ENCODE measurements at regions of chr22 and their contacts with region 1.

Region 1: DNA sequence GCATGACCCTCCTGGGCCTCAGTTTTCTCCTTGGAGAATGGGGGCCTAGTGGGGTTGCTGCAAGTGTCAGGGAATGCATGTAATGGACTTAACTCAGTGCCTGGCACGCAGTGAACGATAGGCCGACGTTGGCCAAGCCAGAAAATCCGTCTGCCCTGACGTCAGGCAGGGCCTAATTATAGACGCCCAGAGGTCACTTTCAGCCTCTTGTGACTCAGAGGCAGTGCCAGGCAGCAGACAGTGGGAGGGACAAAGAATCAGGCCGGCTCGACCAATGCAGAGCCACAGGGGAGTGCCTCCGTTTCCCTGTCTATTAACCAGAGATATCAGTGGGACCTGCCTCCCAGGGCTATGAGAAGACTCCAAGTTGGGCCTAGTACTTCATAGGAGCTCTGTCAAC is 115.0 kb downstream of the MN1 start:
- DNase-seq: no peak
- ATAC-seq: no peak
- H3K4me3 ChIP-seq: no peak overlapping the region
- H3K4me3 Mint-ChIP-seq: no peak overlapping the region
- H3K27ac ChIP-seq: no peak overlapping the region
- H3K27ac Mint-ChIP-seq: no peak overlapping the region
- H3K4me1 ChIP-seq: no peaks in the 10 kb centered on the region
- H3K4me1 Mint-ChIP-seq: no peaks in the 10 kb centered on the region
- H3K27me3 ChIP-seq: no peaks in the 10 kb centered on the region
- H3K27me3 Mint-ChIP-seq: peaks cover 8% of the 10 kb centered on the region
- CTCF ChIP-seq: no peak

Region 2: GRCh38 chr22:27748751-27749191 is 62.2 kb after region 1 on chr22:
- CTCF ChIA-PET with region 1: no interaction called
- POLR2A ChIA-PET with region 1: no interaction called
- intact Hi-C with region 1: loop called in 1 of 2 experiments (anchors 10 kb)
- DNase-seq: peak in 2 of 14 experiments; percentile 15 to 41
- ATAC-seq: no peak
- H3K4me3 ChIP-seq: no peak overlapping the region
- H3K4me3 Mint-ChIP-seq: no peak overlapping the region
- H3K27ac ChIP-seq: no peak overlapping the region
- H3K27ac Mint-ChIP-seq: no peak overlapping the region
- H3K4me1 ChIP-seq: no peaks in the 10 kb centered on the region
- H3K4me1 Mint-ChIP-seq: no peaks in the 10 kb centered on the region
- H3K27me3 ChIP-seq: peaks cover 0 to 6% of the 10 kb centered on the region in 2 experiments
- H3K27me3 Mint-ChIP-seq: peaks cover 30% of the 10 kb centered on the region
- CTCF ChIP-seq: no peak

Measured in CD4-positive, alpha-beta T cell (primary cell).